Heart left ventricle (tissue), 16 donors: ENCODE measurements at regions of chrX and their contacts with region 1.

Region 1: DNA sequence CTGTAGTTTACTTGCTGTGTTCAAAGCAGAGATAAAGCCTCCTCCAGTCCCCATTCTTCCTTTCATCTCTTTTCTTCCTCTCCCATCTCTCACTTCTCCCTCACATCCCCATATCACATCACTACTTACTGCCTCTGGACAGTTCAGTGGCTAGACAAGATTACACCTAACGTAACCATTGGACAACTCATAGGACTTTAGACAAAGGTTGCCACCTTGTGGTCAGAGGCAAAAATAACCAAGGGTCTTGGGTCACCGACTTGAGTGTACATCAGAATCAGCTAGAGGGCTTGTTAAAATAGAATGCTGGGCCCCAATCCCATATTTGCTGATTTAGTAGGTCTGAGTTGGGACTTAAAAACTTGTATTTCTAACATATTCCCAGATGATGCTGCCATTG is 109.3 kb upstream of the DGKK start:
- DNase-seq: peak in 3 of 5 donors; percentile 13 to 29 (median 17)
- ATAC-seq: peak in 2 of 4 donors; percentile 71 to 72
- H3K4me3 ChIP-seq: no peak overlapping the region
- H3K27ac ChIP-seq: no peak overlapping the region
- H3K4me1 ChIP-seq: no peaks in the 10 kb centered on the region
- H3K27me3 ChIP-seq: no peaks in the 10 kb centered on the region
- CTCF ChIP-seq: peak; percentile 32 to 58 (median 53)
- POLR2A ChIP-seq: no peak

Region 2: DNA sequence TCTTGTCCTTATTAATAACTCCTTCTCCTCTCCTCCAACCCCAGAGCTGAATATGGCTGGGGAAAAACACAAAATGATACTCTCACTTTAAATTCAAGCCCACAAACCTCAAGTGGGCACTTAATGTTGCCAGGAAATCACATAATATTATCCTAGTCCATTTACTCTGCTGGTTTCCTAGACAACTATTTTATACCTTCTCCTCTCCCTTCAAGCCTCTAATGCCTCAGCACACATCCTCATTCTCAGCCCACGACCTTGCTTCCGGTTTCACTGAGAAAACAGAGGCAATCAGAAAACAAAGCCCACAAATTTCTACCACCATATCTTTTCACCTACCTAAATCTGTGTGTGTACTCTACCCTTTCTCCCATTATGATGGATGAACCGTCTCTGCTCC is 669.6 kb before region 1 on chrX:
- intact Hi-C with region 1: loop called in 6 of 10 experiments (anchors 2 to 10 kb)
- DNase-seq: no peak
- ATAC-seq: no peak
- H3K4me3 ChIP-seq: no peak overlapping the region
- H3K27ac ChIP-seq: no peak overlapping the region
- H3K4me1 ChIP-seq: no peaks in the 10 kb centered on the region
- H3K27me3 ChIP-seq: peaks cover 0 to 17% (median 0%) of the 10 kb centered on the region in 9 donors
- CTCF ChIP-seq: no peak
- POLR2A ChIP-seq: no peak

Region 3: GRCh38 chrX:49915361-49916222 is 664.4 kb before region 1 on chrX:
- intact Hi-C with region 1: loop called in 7 of 10 experiments (anchors 2 to 10 kb)
- DNase-seq: peak in 3 of 5 donors; percentile 25 to 32 (median 30)
- ATAC-seq: peak in 3 of 4 donors; percentile 68 to 72 (median 72)
- H3K4me3 ChIP-seq: no peak overlapping the region
- H3K27ac ChIP-seq: no peak overlapping the region
- H3K4me1 ChIP-seq: peaks cover 0 to 6% (median 0%) of the 10 kb centered on the region in 12 donors
- H3K27me3 ChIP-seq: peaks cover 0 to 14% (median 0%) of the 10 kb centered on the region in 9 donors
- CTCF ChIP-seq: peak; percentile 58 to 94 (median 74)
- POLR2A ChIP-seq: no peak

Region 4: DNA sequence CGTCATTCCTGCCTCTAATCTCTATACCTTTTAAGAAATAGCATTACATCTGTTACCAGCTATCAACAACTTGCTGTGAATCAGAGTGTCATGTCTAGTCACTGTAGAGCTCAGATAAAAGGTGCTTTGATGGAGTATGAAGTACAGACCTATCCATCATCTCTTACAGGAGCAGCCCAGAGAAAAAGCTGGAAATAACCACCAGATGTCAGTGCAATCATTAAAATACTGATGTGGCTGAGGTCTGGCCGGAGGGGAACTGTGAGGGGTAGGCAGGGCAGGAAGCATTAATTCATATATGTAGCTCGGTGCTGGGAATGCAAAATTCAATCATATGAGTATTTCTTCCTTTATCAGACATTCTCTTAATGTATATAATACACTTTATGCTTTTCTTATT is 479.8 kb before region 1 on chrX:
- intact Hi-C with region 1: loop called in 6 of 10 experiments (anchors 2 to 10 kb)
- DNase-seq: no peak
- ATAC-seq: peak in 2 of 4 donors; percentile 39 to 50
- H3K4me3 ChIP-seq: no peak overlapping the region
- H3K27ac ChIP-seq: no peak overlapping the region
- H3K4me1 ChIP-seq: no peaks in the 10 kb centered on the region
- H3K27me3 ChIP-seq: peaks cover 0 to 8% (median 0%) of the 10 kb centered on the region in 9 donors
- CTCF ChIP-seq: peak in 9 of 12 donors; percentile 10 to 49 (median 38)
- POLR2A ChIP-seq: no peak

Region 5: DNA sequence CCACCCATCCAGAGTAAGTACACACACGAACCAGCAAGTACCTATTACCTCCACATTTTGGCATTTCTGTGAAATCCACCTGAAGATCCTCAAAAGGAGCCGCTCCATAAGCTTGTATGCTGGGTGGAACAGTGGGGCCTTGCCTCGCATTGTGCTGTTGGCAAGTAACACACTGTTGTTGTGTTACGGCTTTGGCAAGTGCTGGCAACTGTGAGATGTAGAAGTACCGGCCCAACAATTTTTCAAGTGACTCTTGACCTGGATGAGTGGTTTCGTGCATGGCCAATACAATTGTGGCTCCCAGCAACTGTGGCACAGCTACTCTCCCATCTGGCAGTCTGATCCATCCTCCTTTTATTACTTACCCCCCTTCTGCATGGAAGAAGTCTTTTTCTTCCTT is 246.6 kb before region 1 on chrX:
- intact Hi-C with region 1: loop called in 1 of 10 experiments (anchors 10 kb)
- DNase-seq: no peak
- ATAC-seq: no peak
- H3K4me3 ChIP-seq: no peak overlapping the region
- H3K27ac ChIP-seq: no peak overlapping the region
- H3K4me1 ChIP-seq: no peaks in the 10 kb centered on the region
- H3K27me3 ChIP-seq: peaks cover 0 to 3% (median 0%) of the 10 kb centered on the region in 9 donors
- CTCF ChIP-seq: no peak
- POLR2A ChIP-seq: no peak

Region 6: GRCh38 chrX:50470103-50471031 is 109.6 kb before region 1 on chrX and contains the start of gene DGKK:
- intact Hi-C with region 1: no loop called
- DNase-seq: peak in 1 of 5 donors; percentile 31
- ATAC-seq: no peak
- H3K4me3 ChIP-seq: peak within 1 kb of the TSS in 3 of 12 donors; percentile 6 to 9 (median 9)
- H3K27ac ChIP-seq: no peak within 1 kb of the TSS
- H3K4me1 ChIP-seq: peaks cover 0 to 22% (median 0%) of the 10 kb centered on the region in 12 donors
- H3K27me3 ChIP-seq: peaks cover 0 to 97% (median 44%) of the 10 kb centered on the region in 9 donors
- CTCF ChIP-seq: no peak
- POLR2A ChIP-seq: no peak
- total RNA-seq, gene DGKK: not detected

Region 7: GRCh38 chrX:50680990-50681389 is 101.0 kb after region 1 on chrX:
- intact Hi-C with region 1: loop called in 1 of 10 experiments (anchors 10 kb)
- DNase-seq: no peak
- ATAC-seq: no peak
- H3K4me3 ChIP-seq: no peak overlapping the region
- H3K27ac ChIP-seq: no peak overlapping the region
- H3K4me1 ChIP-seq: peaks cover 0 to 6% (median 0%) of the 10 kb centered on the region in 12 donors
- H3K27me3 ChIP-seq: peaks cover 0 to 31% (median 0%) of the 10 kb centered on the region in 9 donors
- CTCF ChIP-seq: peak in 11 of 12 donors; percentile 22 to 58 (median 42)
- POLR2A ChIP-seq: no peak